Activated CD4-positive, alpha-beta memory T cell treated with anti-CD3 and anti-CD28 coated beads, Interleukin-2, amount 10 ng/mL, durations not matched to agents 7 days and 5 days (primary cell): ENCODE measurements at regions of chr2 and their contacts with region 1.

Region 1: GRCh38 chr2:23824777-23825212 is 102.1 kb downstream of the ATAD2B start:
- DNase-seq: no peak
- H3K4me3 Mint-ChIP-seq: no peak overlapping the region
- H3K27ac Mint-ChIP-seq: no peak overlapping the region
- H3K4me1 Mint-ChIP-seq: no peaks in the 10 kb centered on the region
- H3K27me3 Mint-ChIP-seq: no peaks in the 10 kb centered on the region

Region 2: GRCh38 chr2:23760736-23761135 is 64.1 kb before region 1 on chr2:
- CTCF ChIA-PET with region 1: no interaction called
- POLR2A ChIA-PET with region 1: no interaction called
- DNase-seq: no peak
- H3K4me3 Mint-ChIP-seq: no peak overlapping the region
- H3K27ac Mint-ChIP-seq: no peak overlapping the region
- H3K4me1 Mint-ChIP-seq: peaks cover 10% of the 10 kb centered on the region
- H3K27me3 Mint-ChIP-seq: no peaks in the 10 kb centered on the region

Region 3: DNA sequence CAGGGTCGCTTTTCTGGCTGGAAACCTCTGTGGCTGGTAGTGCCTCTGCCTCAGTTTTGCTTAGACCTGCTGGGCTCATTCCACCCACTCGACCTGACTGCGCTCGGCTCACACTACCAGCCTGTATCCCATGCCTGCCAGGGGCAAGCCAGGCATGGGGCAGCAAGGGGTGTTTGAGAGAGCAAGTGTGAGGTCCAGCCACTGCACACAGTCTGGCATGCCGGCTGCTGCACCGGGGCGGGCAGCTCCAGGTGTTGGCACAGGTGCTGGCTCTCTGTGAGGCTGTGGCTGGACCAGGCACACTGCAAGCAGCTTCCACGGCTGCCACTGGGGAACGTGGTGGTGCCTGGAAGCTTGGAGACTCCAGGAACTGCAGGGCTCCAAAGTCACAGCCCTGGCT is 11.2 kb after region 1 on chr2:
- CTCF ChIA-PET with region 1: interaction called, 12 read pairs
- POLR2A ChIA-PET with region 1: no interaction called
- DNase-seq: no peak
- H3K4me3 Mint-ChIP-seq: no peak overlapping the region
- H3K27ac Mint-ChIP-seq: no peak overlapping the region
- H3K4me1 Mint-ChIP-seq: no peaks in the 10 kb centered on the region
- H3K27me3 Mint-ChIP-seq: no peaks in the 10 kb centered on the region

Region 4: DNA sequence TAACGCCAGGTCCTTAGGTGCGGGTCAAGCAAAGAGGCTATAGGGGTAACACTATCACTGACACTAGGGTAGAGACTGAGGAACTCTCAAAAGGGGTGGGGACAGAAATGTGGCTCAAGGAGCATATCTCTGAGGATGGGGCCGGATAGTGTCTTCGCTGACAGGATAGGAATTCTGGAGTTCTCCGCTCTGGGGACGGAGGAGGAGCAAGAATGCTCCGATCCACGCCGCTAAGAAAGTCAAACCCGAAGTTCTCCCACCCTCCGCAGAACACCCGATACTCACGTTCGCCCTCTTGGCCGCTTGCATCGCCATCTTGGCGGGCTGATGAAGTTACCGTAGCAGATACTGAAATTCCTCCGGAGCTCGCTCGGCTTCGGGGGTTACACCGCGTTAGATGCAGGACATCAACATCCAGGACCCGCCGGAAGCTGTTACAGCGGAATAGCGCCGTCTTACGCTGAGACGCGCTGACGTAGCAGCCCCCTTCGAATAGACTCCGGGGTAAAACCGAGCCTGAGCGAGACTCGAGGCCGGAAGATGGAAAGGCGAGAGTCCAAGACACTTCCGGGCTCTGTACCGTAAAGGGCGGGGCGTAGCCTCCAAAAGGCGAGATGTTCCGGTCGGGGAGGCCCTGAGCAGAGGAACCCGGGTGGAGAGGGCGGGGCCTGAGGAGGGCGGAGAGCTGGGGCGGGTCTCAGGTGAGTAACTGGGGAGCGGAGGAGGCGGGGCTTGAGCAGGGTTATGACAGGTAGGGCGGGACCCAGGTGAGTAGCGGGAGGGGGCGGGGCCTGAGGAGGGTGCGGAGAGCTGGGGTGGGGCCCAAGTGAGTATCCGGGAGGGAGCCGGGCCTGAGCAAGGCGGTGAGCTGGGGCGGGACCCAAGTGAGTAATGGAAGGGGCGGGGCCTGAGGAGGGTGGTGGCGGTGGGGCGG is 251.4 kb after region 1 on chr2 and contains the start of gene SF3B6:
- CTCF ChIA-PET with region 1: interaction called, 11 read pairs
- POLR2A ChIA-PET with region 1: no interaction called
- DNase-seq: peak; percentile 100
- H3K4me3 Mint-ChIP-seq: peak within 1 kb of the TSS; percentile 98
- H3K27ac Mint-ChIP-seq: peak within 1 kb of the TSS; percentile 96
- H3K4me1 Mint-ChIP-seq: peaks cover 38% of the 10 kb centered on the region
- H3K27me3 Mint-ChIP-seq: no peaks in the 10 kb centered on the region
- total RNA-seq, gene SF3B6: 87.4 to 88.2 TPM

Region 5: GRCh38 chr2:24164125-24164973 is 339.6 kb after region 1 on chr2:
- CTCF ChIA-PET with region 1: interaction called, 15 read pairs
- POLR2A ChIA-PET with region 1: no interaction called
- DNase-seq: peak; percentile 36
- H3K4me3 Mint-ChIP-seq: no peak overlapping the region
- H3K27ac Mint-ChIP-seq: no peak overlapping the region
- H3K4me1 Mint-ChIP-seq: no peaks in the 10 kb centered on the region
- H3K27me3 Mint-ChIP-seq: peaks cover 2% of the 10 kb centered on the region